ENCODE measurements at regions of chr17 and their contacts with region 1.

Region 1: GRCh38 chr17:37310940-37311339 is 64.8 kb upstream of the C17orf78 start:
- DNase-seq: no peak
- H3K4me3 ChIP-seq: no peak overlapping the region
- H3K27ac ChIP-seq: no peak overlapping the region
- H3K4me1 ChIP-seq: peaks cover 11% of the 10 kb centered on the region
- H3K27me3 ChIP-seq: no peaks in the 10 kb centered on the region
- CTCF ChIP-seq: no peak

Region 2: GRCh38 chr17:37123941-37124820 is 186.8 kb before region 1 on chr17:
- CTCF ChIA-PET with region 1: no interaction called
- dilution Hi-C with region 1: no loop called
- in situ Hi-C with region 1: no loop called
- intact Hi-C with region 1: no loop called
- DNase-seq: no peak
- H3K4me3 ChIP-seq: no peak overlapping the region
- H3K27ac ChIP-seq: no peak overlapping the region
- H3K4me1 ChIP-seq: no peaks in the 10 kb centered on the region
- H3K27me3 ChIP-seq: no peaks in the 10 kb centered on the region
- CTCF ChIP-seq: no peak

Region 3: GRCh38 chr17:37190493-37190892 is 120.4 kb before region 1 on chr17:
- CTCF ChIA-PET with region 1: no interaction called
- dilution Hi-C with region 1: no loop called
- in situ Hi-C with region 1: no loop called
- intact Hi-C with region 1: no loop called
- DNase-seq: no peak
- H3K4me3 ChIP-seq: no peak overlapping the region
- H3K27ac ChIP-seq: no peak overlapping the region
- H3K4me1 ChIP-seq: no peaks in the 10 kb centered on the region
- H3K27me3 ChIP-seq: no peaks in the 10 kb centered on the region
- CTCF ChIP-seq: peak; percentile 10 to 15

Region 4: DNA sequence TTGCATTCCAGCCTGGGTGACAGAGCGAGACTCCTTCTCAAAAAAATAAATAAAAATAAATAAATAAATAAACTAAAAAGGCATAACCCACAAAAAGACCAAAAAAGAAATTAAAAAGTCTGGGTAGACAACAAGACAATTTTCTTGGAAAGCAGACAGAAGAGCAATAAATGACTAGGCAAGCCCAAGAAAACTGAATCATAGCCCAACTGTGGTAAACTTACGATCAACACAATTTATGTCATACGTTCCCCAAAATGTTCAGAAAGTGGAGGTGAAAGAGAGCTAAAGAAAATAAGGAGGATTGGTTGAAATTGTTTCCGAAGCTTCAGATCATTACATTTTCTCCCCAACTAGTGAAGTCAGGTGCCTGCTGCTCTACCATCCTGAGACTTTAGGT is 33.6 kb after region 1 on chr17:
- CTCF ChIA-PET with region 1: no interaction called
- dilution Hi-C with region 1: loop called (anchors 5 kb)
- in situ Hi-C with region 1: no loop called
- intact Hi-C with region 1: no loop called
- DNase-seq: no peak
- H3K4me3 ChIP-seq: no peak overlapping the region
- H3K27ac ChIP-seq: no peak overlapping the region
- H3K4me1 ChIP-seq: no peaks in the 10 kb centered on the region
- H3K27me3 ChIP-seq: no peaks in the 10 kb centered on the region
- CTCF ChIP-seq: no peak